Aorta (tissue), 5 donors: ENCODE measurements at regions of chr2 and their contacts with region 1.

Region 1: GRCh38 chr2:128469203-128469602 is 150.5 kb upstream of the HS6ST1 start:
- DNase-seq: no peak
- ATAC-seq: no peak
- H3K4me3 ChIP-seq: no peak overlapping the region
- H3K27ac ChIP-seq: no peak overlapping the region
- H3K4me1 ChIP-seq: no peaks in the 10 kb centered on the region
- H3K27me3 ChIP-seq: no peaks in the 10 kb centered on the region

Region 2: DNA sequence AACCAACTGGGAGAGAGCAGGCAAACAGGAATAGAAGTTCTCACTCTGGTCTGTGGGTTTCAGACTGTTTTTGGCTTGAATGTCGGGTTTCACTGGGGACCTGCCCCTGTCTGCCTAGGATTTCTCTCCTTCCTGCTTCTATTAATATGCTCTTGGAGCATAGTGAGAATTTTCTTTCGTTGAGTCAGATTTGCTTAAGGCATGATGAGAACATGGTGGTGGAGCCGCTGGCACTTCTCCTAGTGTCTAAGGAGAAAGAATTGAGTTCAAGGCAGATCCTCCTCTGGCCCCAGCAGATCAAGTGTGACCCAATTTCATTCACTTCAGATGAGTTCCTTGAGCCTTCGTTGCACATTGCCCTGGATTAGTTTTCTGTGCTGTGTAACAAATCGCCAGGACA is 46.6 kb before region 1 on chr2:
- intact Hi-C with region 1: loop called in 1 of 2 experiments (anchors 5 kb)
- DNase-seq: peak; percentile 77 to 81
- ATAC-seq: peak; percentile 56
- H3K4me3 ChIP-seq: no peak overlapping the region
- H3K27ac ChIP-seq: peak overlapping the region; percentile 71 to 96
- H3K4me1 ChIP-seq: peaks cover 0 to 4% of the 10 kb centered on the region in 2 donors
- H3K27me3 ChIP-seq: no peaks in the 10 kb centered on the region

Region 3: DNA sequence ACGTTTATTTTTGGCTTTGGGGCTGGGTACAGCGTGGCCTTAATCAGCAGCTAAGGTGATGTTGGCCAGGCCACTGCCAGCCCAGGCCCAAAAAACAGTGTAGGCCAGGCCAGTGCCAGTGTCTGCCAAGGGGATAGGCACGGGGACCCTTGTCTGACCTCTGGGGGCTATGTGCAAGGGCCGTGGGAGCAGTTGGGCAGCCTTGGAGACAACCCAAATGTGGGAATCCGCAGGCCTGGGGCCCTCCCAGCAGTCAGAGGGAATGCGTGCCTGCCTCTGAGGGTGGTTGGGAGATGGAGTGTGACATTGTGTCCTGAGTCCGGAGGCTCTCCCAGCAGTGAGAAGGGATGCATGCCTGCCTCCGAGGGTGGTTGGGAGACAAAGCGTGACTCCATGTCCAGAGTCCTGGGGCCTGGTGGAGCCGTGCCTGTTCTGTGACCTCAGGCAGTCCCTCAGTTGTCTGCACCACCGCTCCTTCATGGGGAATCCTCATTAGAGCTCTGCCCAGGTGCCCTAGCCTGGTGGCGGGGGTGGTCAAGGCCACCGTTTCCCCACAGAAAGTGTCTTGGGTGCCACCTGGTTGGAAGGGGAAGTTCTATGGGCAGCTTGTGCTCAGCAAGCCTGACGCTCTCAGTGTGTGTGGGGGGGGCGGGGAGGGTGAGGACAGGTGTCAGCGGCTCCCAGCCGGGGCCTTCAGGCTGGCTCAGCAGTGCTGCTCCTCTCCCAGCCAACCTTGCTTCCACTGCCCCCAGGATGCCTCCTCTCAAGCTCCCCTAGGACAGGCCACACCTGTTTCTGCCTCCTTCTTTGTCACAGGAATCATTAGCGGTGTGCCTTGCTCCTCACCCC is 34.8 kb after region 1 on chr2:
- intact Hi-C with region 1: no loop called
- DNase-seq: peak in 1 of 2 donors; percentile 63
- ATAC-seq: peak; percentile 33
- H3K4me3 ChIP-seq: no peak overlapping the region
- H3K27ac ChIP-seq: peak overlapping the region in 1 of 2 donors; percentile 53
- H3K4me1 ChIP-seq: no peaks in the 10 kb centered on the region
- H3K27me3 ChIP-seq: no peaks in the 10 kb centered on the region

Region 4: GRCh38 chr2:128520791-128521190 is 51.6 kb after region 1 on chr2:
- intact Hi-C with region 1: no loop called
- DNase-seq: no peak
- ATAC-seq: no peak
- H3K4me3 ChIP-seq: no peak overlapping the region
- H3K27ac ChIP-seq: no peak overlapping the region
- H3K4me1 ChIP-seq: no peaks in the 10 kb centered on the region
- H3K27me3 ChIP-seq: no peaks in the 10 kb centered on the region

Region 5: DNA sequence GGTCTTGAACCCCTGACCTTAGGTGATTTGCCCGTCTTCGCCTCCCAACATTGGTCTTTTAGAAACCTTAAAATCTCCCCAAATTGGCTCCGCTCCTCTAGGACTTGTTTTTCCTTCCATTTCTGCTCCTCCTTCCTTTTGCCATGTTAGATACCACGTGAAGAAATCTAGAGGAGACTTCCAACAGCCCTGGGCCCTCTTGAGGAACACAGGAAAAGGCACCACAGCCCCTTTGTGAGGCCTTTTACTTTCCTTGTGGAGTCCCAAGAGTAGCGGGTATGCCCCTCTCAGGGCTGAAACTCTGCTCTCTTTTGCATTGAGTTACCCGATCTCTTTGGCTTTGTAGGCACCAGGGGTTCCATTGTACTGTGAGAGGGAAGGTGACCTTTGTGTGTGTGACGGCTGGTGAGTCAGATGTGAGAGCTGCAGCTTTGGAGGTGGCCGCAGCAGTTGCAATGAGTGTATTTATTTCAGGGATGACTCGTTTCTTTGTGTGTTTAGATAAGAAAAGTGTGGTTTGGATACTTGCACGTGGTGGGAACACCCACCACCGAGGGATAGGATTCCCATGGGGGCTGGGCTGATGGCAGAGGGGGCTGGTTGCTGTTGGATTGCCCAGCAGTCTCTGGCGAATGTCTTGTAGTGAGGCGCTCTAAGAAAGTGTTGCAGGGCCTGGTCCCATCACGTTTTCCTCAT is 67.9 kb after region 1 on chr2:
- intact Hi-C with region 1: no loop called
- DNase-seq: no peak
- ATAC-seq: no peak
- H3K4me3 ChIP-seq: no peak overlapping the region
- H3K27ac ChIP-seq: no peak overlapping the region
- H3K4me1 ChIP-seq: no peaks in the 10 kb centered on the region
- H3K27me3 ChIP-seq: no peaks in the 10 kb centered on the region

Region 6: DNA sequence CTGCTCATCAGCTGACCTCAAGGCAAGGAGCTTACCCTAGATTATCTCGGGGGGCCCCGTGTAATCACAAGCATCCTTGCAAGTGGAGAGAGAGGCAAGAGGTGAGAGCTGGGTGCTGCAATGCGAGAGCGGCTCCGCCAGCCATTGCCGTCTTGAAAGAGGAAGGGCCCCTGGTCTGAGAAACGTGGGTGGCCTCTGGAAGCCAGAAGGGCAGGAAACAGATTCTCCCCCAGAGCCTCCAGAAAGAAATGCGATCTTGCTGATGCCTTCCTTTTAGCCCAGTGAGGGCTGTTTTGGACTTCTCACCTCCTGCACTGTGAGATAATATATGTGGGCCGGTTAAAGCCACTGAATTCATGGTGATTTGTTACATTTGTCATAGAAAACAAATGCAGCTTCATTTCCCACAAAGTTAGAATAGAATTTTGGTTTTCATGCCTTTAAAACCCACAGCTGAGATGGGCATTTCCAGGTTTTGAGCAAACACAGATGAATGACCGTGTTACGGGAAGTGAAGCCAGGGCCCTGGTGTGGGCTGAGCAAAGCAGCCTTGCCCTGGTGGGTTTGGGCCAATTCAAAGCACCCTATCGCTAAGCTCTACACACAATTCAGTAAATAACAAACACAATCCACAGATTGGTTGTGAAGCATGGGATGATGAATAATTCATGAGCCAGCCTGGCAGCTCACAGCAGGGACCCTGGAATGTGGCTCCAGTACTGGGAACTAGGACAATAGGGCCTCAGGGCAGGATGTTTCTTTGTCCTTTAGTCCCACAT is 169.3 kb after region 1 on chr2:
- intact Hi-C with region 1: no loop called
- DNase-seq: peak in 1 of 2 donors; percentile 71
- ATAC-seq: peak; percentile 30
- H3K4me3 ChIP-seq: no peak overlapping the region
- H3K27ac ChIP-seq: no peak overlapping the region
- H3K4me1 ChIP-seq: no peaks in the 10 kb centered on the region
- H3K27me3 ChIP-seq: no peaks in the 10 kb centered on the region